ENCODE measurements at regions of chr3 and their contacts with region 1.

Region 1: DNA sequence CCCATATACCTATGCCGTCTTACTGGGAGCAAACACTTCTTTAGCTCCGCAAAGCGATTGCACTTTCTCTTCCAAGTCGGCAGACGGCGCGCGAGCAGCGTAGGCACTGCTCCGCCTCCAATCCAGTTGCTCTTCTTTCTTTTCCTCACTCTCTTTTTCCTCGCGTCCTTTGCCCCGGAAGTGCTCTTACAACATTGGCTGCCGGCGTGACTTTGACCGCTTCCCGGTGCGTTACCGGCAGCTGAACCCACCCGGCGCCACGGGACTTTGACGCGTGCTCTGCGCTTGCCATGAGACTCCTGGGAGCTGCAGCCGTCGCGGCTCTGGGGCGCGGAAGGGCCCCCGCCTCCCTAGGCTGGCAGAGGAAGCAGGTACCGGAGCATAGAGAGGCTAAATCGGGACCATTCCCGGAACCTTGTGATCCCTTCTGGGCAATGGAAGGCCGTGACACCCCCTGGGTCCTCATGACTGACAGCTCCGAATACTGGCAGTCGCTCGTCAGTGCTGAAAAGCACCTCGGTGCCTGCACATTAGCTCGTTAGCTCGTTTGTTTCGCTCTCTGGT is at the start of gene GFM1:
- DNase-seq: peak; percentile 76 to 98 (median 80)
- ATAC-seq: peak; percentile 94
- H3K4me3 ChIP-seq: peak within 1 kb of the TSS; percentile 99
- H3K27ac ChIP-seq: peak within 1 kb of the TSS; percentile 89
- H3K4me1 ChIP-seq: peaks cover 9 to 17% of the 10 kb centered on the region in 2 experiments; a peak in 4 of 5 replicates
- H3K27me3 ChIP-seq: no peaks in the 10 kb centered on the region
- CTCF ChIP-seq: peak; percentile 88 to 98 (median 94)
- EP300 ChIP-seq: peak; percentile 35; the same call in 1 of the 2 replicates
- POLR2A ChIP-seq: peak; percentile 96
- RAD21 ChIP-seq: peak; percentile 48 to 62
- polyA plus RNA-seq, gene GFM1: 38.9 to 49.9 TPM

Region 2: GRCh38 chr3:158570999-158571974 is 73.1 kb before region 1 on chr3 and contains the start of gene MLF1:
- CTCF ChIA-PET with region 1: no interaction called
- POLR2A ChIA-PET with region 1: interaction called, 6 read pairs
- in situ Hi-C with region 1: no loop called
- intact Hi-C with region 1: loop called (anchors 10 kb)
- DNase-seq: peak; percentile 97 to 99 (median 98)
- ATAC-seq: peak; percentile 100
- H3K4me3 ChIP-seq: peak within 1 kb of the TSS; percentile 63
- H3K27ac ChIP-seq: peak within 1 kb of the TSS; percentile 83
- H3K4me1 ChIP-seq: peaks cover 8 to 25% of the 10 kb centered on the region in 2 experiments; a peak in 4 of 5 replicates
- H3K27me3 ChIP-seq: no peaks in the 10 kb centered on the region
- CTCF ChIP-seq: no peak
- EP300 ChIP-seq: no peak
- POLR2A ChIP-seq: peak; percentile 76
- RAD21 ChIP-seq: no peak
- polyA plus RNA-seq, gene MLF1: 63.5 to 71.0 TPM

Region 3: GRCh38 chr3:158702815-158703481 is 58.5 kb after region 1 on chr3:
- CTCF ChIA-PET with region 1: no interaction called
- POLR2A ChIA-PET with region 1: no interaction called
- in situ Hi-C with region 1: no loop called
- intact Hi-C with region 1: no loop called
- DNase-seq: no peak
- ATAC-seq: no peak
- H3K4me3 ChIP-seq: no peak overlapping the region
- H3K27ac ChIP-seq: no peak overlapping the region
- H3K4me1 ChIP-seq: peaks cover 0 to 8% of the 10 kb centered on the region in 2 experiments; a peak in 3 of 5 replicates
- H3K27me3 ChIP-seq: no peaks in the 10 kb centered on the region
- CTCF ChIP-seq: no peak
- EP300 ChIP-seq: no peak
- POLR2A ChIP-seq: no peak
- RAD21 ChIP-seq: no peak

Measured in K562 (cell line).